Ovary (tissue), 10 donors: ENCODE measurements at regions of chr4 and their contacts with region 1.

Region 1: GRCh38 chr4:119151161-119151560 is 15.5 kb downstream of the MYOZ2 start:
- DNase-seq: no peak
- H3K4me3 ChIP-seq: no peak overlapping the region
- H3K27ac ChIP-seq: no peak overlapping the region
- H3K4me1 ChIP-seq: no peaks in the 10 kb centered on the region
- H3K27me3 ChIP-seq: no peaks in the 10 kb centered on the region
- CTCF ChIP-seq: no peak
- EP300 ChIP-seq: no peak
- POLR2A ChIP-seq: no peak

Region 2: DNA sequence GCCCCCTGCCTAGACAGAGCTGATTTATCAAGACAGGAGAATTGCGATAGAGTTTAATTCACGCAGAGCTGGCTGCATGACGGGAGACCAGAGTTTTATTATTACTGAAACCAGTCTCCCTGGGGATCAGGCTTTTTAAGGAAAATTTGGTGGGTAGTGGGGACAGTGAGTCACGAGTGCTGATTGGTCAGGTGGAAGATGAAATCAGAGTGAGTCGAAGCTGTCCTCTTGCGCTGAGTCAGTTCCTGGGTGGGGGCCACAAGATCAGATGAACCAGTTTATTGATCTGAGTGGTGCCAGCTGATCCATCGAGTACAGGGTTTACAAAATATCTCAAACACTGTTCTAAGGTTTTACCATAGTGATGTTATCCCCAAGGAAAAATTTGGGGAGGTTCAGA is 21.1 kb after region 1 on chr4:
- intact Hi-C with region 1: loop called in 1 of 4 experiments (anchors 2 kb)
- DNase-seq: no peak
- H3K4me3 ChIP-seq: no peak overlapping the region
- H3K27ac ChIP-seq: no peak overlapping the region
- H3K4me1 ChIP-seq: no peaks in the 10 kb centered on the region
- H3K27me3 ChIP-seq: no peaks in the 10 kb centered on the region
- CTCF ChIP-seq: no peak
- EP300 ChIP-seq: no peak
- POLR2A ChIP-seq: no peak

Region 3: GRCh38 chr4:119310826-119311225 is 159.7 kb after region 1 on chr4:
- intact Hi-C with region 1: no loop called
- DNase-seq: no peak
- H3K4me3 ChIP-seq: no peak overlapping the region
- H3K27ac ChIP-seq: no peak overlapping the region
- H3K4me1 ChIP-seq: no peaks in the 10 kb centered on the region
- H3K27me3 ChIP-seq: no peaks in the 10 kb centered on the region
- CTCF ChIP-seq: no peak
- EP300 ChIP-seq: no peak
- POLR2A ChIP-seq: no peak

Region 4: GRCh38 chr4:121154103-121154515 is 2002.9 kb after region 1 on chr4:
- intact Hi-C with region 1: no loop called
- DNase-seq: no peak
- H3K4me3 ChIP-seq: no peak overlapping the region
- H3K27ac ChIP-seq: no peak overlapping the region
- H3K4me1 ChIP-seq: no peaks in the 10 kb centered on the region
- H3K27me3 ChIP-seq: no peaks in the 10 kb centered on the region
- CTCF ChIP-seq: no peak
- EP300 ChIP-seq: no peak
- POLR2A ChIP-seq: no peak